ENCODE measurements at regions of chr3 and their contacts with region 1.

Region 1: GRCh38 chr3:197298341-197298857 is at the start of gene DLG1:
- DNase-seq: peak; percentile 61 to 88 (median 75)
- ATAC-seq: peak; percentile 53
- H3K4me3 ChIP-seq: peak within 1 kb of the TSS; percentile 98
- H3K4me3 Mint-ChIP-seq: peak within 1 kb of the TSS; percentile 99
- H3K27ac ChIP-seq: peak within 1 kb of the TSS; percentile 79 to 80
- H3K27ac Mint-ChIP-seq: peak within 1 kb of the TSS; percentile 92
- H3K4me1 ChIP-seq: peaks cover 11% of the 10 kb centered on the region
- H3K4me1 Mint-ChIP-seq: peaks cover 30% of the 10 kb centered on the region
- H3K27me3 ChIP-seq: peaks cover 4 to 7% of the 10 kb centered on the region in 2 experiments
- H3K27me3 Mint-ChIP-seq: peaks cover 17% of the 10 kb centered on the region
- CTCF ChIP-seq: no peak
- total RNA-seq, gene DLG1: 86.8 to 91.8 TPM

Region 2: GRCh38 chr3:197256836-197257444 is 41.5 kb before region 1 on chr3:
- CTCF ChIA-PET with region 1: interaction called, 3 read pairs
- POLR2A ChIA-PET with region 1: no interaction called
- intact Hi-C with region 1: loop called in 1 of 2 experiments (anchors 5 kb)
- DNase-seq: peak in 9 of 14 experiments; percentile 9 to 74 (median 21)
- ATAC-seq: no peak
- H3K4me3 ChIP-seq: no peak overlapping the region
- H3K4me3 Mint-ChIP-seq: no peak overlapping the region
- H3K27ac ChIP-seq: no peak overlapping the region
- H3K27ac Mint-ChIP-seq: no peak overlapping the region
- H3K4me1 ChIP-seq: peaks cover 4% of the 10 kb centered on the region
- H3K4me1 Mint-ChIP-seq: peaks cover 74% of the 10 kb centered on the region
- H3K27me3 ChIP-seq: no peaks in the 10 kb centered on the region
- H3K27me3 Mint-ChIP-seq: no peaks in the 10 kb centered on the region
- CTCF ChIP-seq: peak; percentile 82

Region 3: GRCh38 chr3:197456261-197457091 is 158.1 kb after region 1 on chr3:
- CTCF ChIA-PET with region 1: no interaction called
- POLR2A ChIA-PET with region 1: interaction called, 3 read pairs
- intact Hi-C with region 1: loop called in 1 of 2 experiments (anchors 2 kb)
- DNase-seq: peak in 10 of 14 experiments; percentile 11 to 65 (median 45)
- ATAC-seq: peak; percentile 35
- H3K4me3 ChIP-seq: peak overlapping the region; percentile 78
- H3K4me3 Mint-ChIP-seq: peak overlapping the region; percentile 91
- H3K27ac ChIP-seq: no peak overlapping the region
- H3K27ac Mint-ChIP-seq: peak overlapping the region; percentile 49
- H3K4me1 ChIP-seq: peaks cover 29% of the 10 kb centered on the region
- H3K4me1 Mint-ChIP-seq: peaks cover 24% of the 10 kb centered on the region
- H3K27me3 ChIP-seq: no peaks in the 10 kb centered on the region
- H3K27me3 Mint-ChIP-seq: no peaks in the 10 kb centered on the region
- CTCF ChIP-seq: no peak

Region 4: GRCh38 chr3:197554562-197555280 is 256.3 kb after region 1 on chr3:
- CTCF ChIA-PET with region 1: no interaction called
- POLR2A ChIA-PET with region 1: no interaction called
- intact Hi-C with region 1: loop called in 1 of 2 experiments (anchors 5 kb)
- DNase-seq: peak; percentile 79 to 95 (median 90)
- ATAC-seq: peak; percentile 93
- H3K4me3 ChIP-seq: peak overlapping the region; percentile 95
- H3K4me3 Mint-ChIP-seq: peak overlapping the region; percentile 96
- H3K27ac ChIP-seq: peak overlapping the region; percentile 81
- H3K27ac Mint-ChIP-seq: peak overlapping the region; percentile 84
- H3K4me1 ChIP-seq: peaks cover 21% of the 10 kb centered on the region
- H3K4me1 Mint-ChIP-seq: peaks cover 31% of the 10 kb centered on the region
- H3K27me3 ChIP-seq: peaks cover 0 to 8% of the 10 kb centered on the region in 2 experiments
- H3K27me3 Mint-ChIP-seq: peaks cover 15% of the 10 kb centered on the region
- CTCF ChIP-seq: peak; percentile 64

Region 5: DNA sequence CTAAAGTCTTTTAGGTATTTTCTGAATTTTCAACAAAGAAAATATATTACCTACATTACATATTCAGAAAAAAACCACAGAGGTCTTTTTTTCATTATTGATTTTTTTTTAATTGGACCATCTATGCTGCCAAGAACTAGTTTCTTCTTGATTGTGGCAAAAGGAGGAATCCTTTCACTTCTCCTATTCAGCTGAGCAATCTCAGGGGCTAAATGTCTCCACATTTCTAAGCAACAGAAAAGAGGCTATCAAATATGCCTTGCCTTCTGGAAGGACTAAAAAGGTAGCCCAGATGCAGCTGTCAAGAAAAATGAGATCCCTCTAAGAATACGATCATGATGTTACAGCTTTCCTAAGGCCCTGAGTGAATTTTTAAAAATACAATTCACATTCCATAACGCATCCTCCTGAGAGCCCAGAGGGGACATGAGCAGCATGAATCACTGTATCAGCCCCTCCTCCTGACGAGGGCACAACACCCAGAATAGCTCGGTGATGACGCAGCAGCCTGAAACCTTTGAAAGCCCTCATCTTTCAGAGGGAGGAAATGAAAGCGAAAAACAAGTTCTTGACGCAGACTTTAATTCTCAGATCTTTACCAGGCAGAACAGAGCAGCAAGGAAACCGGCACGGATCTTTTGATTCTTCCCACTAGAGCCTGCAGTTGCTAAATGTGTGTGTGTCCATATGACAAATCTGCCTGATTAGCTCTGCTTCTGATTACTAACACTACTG is 413.7 kb after region 1 on chr3:
- CTCF ChIA-PET with region 1: no interaction called
- POLR2A ChIA-PET with region 1: no interaction called
- intact Hi-C with region 1: loop called in 1 of 2 experiments (anchors 10 kb)
- DNase-seq: peak; percentile 71 to 97 (median 82)
- ATAC-seq: peak; percentile 98
- H3K4me3 ChIP-seq: peak overlapping the region; percentile 47
- H3K4me3 Mint-ChIP-seq: peak overlapping the region; percentile 80
- H3K27ac ChIP-seq: peak overlapping the region; percentile 74 to 87
- H3K27ac Mint-ChIP-seq: peak overlapping the region; percentile 88
- H3K4me1 ChIP-seq: peaks cover 9% of the 10 kb centered on the region
- H3K4me1 Mint-ChIP-seq: peaks cover 25% of the 10 kb centered on the region
- H3K27me3 ChIP-seq: no peaks in the 10 kb centered on the region
- H3K27me3 Mint-ChIP-seq: no peaks in the 10 kb centered on the region
- CTCF ChIP-seq: no peak

Region 6: GRCh38 chr3:197878427-197878826 is 580.0 kb after region 1 on chr3:
- CTCF ChIA-PET with region 1: no interaction called
- POLR2A ChIA-PET with region 1: no interaction called
- intact Hi-C with region 1: no loop called
- DNase-seq: peak in 3 of 14 experiments; percentile 9 to 35 (median 22)
- ATAC-seq: no peak
- H3K4me3 ChIP-seq: no peak overlapping the region
- H3K4me3 Mint-ChIP-seq: no peak overlapping the region
- H3K27ac ChIP-seq: no peak overlapping the region
- H3K27ac Mint-ChIP-seq: peak overlapping the region; percentile 6
- H3K4me1 ChIP-seq: peaks cover 4% of the 10 kb centered on the region
- H3K4me1 Mint-ChIP-seq: peaks cover 11% of the 10 kb centered on the region
- H3K27me3 ChIP-seq: no peaks in the 10 kb centered on the region
- H3K27me3 Mint-ChIP-seq: no peaks in the 10 kb centered on the region
- CTCF ChIP-seq: no peak

Region 7: GRCh38 chr3:197959898-197960693 is 661.7 kb after region 1 on chr3 and contains the start of gene LMLN:
- CTCF ChIA-PET with region 1: no interaction called
- POLR2A ChIA-PET with region 1: no interaction called
- intact Hi-C with region 1: loop called in 1 of 2 experiments (anchors 10 kb)
- DNase-seq: peak; percentile 89 to 98 (median 94)
- ATAC-seq: peak; percentile 91
- H3K4me3 ChIP-seq: peak within 1 kb of the TSS; percentile 91
- H3K4me3 Mint-ChIP-seq: peak within 1 kb of the TSS; percentile 90
- H3K27ac ChIP-seq: peak within 1 kb of the TSS; percentile 60 to 84
- H3K27ac Mint-ChIP-seq: peak within 1 kb of the TSS; percentile 95
- H3K4me1 ChIP-seq: peaks cover 36% of the 10 kb centered on the region
- H3K4me1 Mint-ChIP-seq: peaks cover 52% of the 10 kb centered on the region
- H3K27me3 ChIP-seq: no peaks in the 10 kb centered on the region
- H3K27me3 Mint-ChIP-seq: no peaks in the 10 kb centered on the region
- CTCF ChIP-seq: no peak
- total RNA-seq, gene LMLN: 3.5 to 3.6 TPM